ENCODE measurements at regions of chr4 and their contacts with region 1.

Region 1: GRCh38 chr4:124712372-124713184 is at the start of gene ANKRD50:
- DNase-seq: peak; percentile 89
- H3K4me3 ChIP-seq: peak within 1 kb of the TSS; percentile 78 to 98 (median 80)
- H3K27ac ChIP-seq: peak within 1 kb of the TSS; percentile 80
- H3K4me1 ChIP-seq: peaks cover 9% of the 10 kb centered on the region
- H3K27me3 ChIP-seq: no peaks in the 10 kb centered on the region
- CTCF ChIP-seq: no peak
- total RNA-seq, gene ANKRD50: 21.6 to 34.3 TPM

Region 2: DNA sequence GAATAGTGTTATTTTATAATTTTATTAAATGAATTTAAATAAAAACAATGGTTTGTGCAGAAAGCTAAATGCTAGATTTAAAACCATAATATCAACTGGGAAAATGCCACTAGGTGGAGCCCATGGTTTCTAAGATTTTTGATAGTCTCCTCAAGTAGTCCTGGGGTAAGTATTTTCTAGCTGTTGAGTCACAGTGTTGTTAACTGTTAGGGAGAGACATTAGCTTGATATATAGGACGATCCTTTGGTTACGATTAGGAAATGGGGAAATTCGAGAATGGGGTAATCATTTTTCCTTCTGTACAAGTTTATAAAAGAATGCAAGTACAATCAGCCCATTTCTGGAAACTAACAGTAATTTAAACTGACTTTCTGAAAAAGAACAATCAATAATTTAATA is 378.5 kb before region 1 on chr4:
- CTCF ChIA-PET with region 1: no interaction called
- dilution Hi-C with region 1: no loop called
- in situ Hi-C with region 1: no loop called
- intact Hi-C with region 1: loop called (anchors 1 kb)
- DNase-seq: peak; percentile 81
- H3K4me3 ChIP-seq: no peak overlapping the region
- H3K27ac ChIP-seq: no peak overlapping the region
- H3K4me1 ChIP-seq: no peaks in the 10 kb centered on the region
- H3K27me3 ChIP-seq: peaks cover 1% of the 10 kb centered on the region
- CTCF ChIP-seq: peak; percentile 53 to 67

Region 3: DNA sequence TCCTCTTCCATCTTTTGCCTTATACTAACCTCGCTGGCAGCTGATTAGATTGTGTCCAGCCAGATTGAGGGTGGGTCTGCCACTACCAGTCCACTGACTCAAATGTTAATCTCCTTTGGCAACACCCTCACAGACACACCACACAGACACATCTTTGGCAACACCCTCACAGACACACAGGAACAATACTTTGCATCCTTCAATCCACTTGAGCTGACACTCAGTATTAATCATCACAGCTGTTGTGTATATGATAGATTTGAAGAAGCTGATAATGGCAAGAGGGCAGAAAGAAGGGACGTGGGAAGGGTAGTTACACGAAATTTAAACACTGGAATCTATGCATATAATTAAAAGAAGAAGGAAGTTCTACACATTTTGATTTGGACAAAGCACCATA is 139.5 kb before region 1 on chr4:
- CTCF ChIA-PET with region 1: no interaction called
- dilution Hi-C with region 1: no loop called
- in situ Hi-C with region 1: no loop called
- intact Hi-C with region 1: loop called (anchors 10 kb)
- DNase-seq: no peak
- H3K4me3 ChIP-seq: no peak overlapping the region
- H3K27ac ChIP-seq: no peak overlapping the region
- H3K4me1 ChIP-seq: no peaks in the 10 kb centered on the region
- H3K27me3 ChIP-seq: no peaks in the 10 kb centered on the region
- CTCF ChIP-seq: no peak

Region 4: DNA sequence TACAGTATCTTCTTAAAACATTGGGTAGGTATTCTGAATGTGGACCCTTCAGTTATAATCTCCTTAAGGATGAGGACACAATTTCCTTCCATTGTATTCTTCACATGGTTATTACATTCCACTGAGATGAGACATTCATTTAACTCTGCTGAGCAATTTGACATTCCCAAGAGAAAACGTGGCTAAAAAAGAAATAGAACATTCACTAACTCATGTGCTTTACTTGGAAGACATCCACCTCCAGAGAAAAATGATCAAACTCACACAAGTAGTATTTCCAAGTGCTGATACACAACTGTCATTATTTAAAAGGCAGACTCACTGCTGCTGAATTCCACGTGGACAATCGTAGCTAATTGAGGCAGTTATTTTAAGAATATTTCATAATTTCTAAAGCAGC is 227.8 kb after region 1 on chr4:
- CTCF ChIA-PET with region 1: no interaction called
- dilution Hi-C with region 1: no loop called
- in situ Hi-C with region 1: loop called in 1 of 2 experiments (anchors 25 kb)
- intact Hi-C with region 1: loop called (anchors 2 kb)
- DNase-seq: peak; percentile 92
- H3K4me3 ChIP-seq: no peak overlapping the region
- H3K27ac ChIP-seq: peak overlapping the region; percentile 71
- H3K4me1 ChIP-seq: peaks cover 25% of the 10 kb centered on the region
- H3K27me3 ChIP-seq: no peaks in the 10 kb centered on the region
- CTCF ChIP-seq: no peak

Region 5: DNA sequence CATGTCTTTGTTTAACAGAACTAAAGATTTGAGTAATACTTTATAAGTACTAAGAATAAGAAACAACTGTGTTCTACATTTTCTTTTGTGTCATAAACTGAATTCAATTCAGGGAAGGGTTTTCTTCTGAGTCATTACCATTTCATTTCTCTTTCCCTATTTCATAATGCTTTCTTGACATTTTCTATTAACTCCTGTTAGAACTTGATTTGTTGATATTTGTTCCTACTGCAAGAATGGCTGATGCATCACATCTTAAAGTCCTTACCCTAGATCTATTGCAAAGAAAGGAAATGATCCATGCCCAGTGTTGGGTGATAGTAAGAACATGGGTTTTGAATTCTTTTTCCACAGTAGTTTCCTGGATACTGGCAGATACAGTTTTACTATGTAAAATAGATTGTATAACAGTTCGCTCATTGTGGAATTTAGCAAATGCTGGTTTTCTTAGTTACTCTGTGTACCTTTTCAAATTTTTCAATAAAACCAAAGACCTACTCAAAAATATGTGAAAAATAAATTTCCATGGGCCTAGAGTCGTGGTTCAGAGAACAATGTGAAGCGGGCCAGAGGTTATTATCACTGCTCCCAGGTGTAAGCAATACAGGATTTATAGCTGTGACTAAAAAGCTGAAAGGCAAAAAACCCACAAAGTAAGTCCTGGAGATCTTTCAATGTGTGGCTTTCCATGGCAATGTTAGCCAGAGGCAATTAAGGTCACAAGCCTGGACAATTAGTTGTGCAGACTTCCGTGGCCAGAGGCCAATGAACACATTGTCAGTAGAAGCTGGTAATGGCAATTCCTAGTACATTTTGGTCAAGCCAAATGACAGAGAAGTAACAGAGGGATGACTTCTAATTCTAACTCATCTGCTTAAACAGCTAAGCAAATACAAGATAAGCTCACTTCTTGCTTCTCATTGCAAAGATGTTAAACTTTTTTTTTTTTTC is 474.9 kb after region 1 on chr4:
- CTCF ChIA-PET with region 1: no interaction called
- dilution Hi-C with region 1: no loop called
- in situ Hi-C with region 1: no loop called
- intact Hi-C with region 1: loop called (anchors 5 kb)
- DNase-seq: peak; percentile 88
- H3K4me3 ChIP-seq: no peak overlapping the region
- H3K27ac ChIP-seq: peak overlapping the region; percentile 72
- H3K4me1 ChIP-seq: peaks cover 21% of the 10 kb centered on the region
- H3K27me3 ChIP-seq: no peaks in the 10 kb centered on the region
- CTCF ChIP-seq: no peak

Region 6: GRCh38 chr4:125266901-125267604 is 554.5 kb after region 1 on chr4:
- CTCF ChIA-PET with region 1: no interaction called
- dilution Hi-C with region 1: no loop called
- in situ Hi-C with region 1: loop called in 1 of 2 experiments (anchors 25 kb)
- intact Hi-C with region 1: no loop called
- DNase-seq: peak; percentile 96
- H3K4me3 ChIP-seq: peak overlapping the region; percentile 21 to 30 (median 22)
- H3K27ac ChIP-seq: peak overlapping the region; percentile 59
- H3K4me1 ChIP-seq: peaks cover 11% of the 10 kb centered on the region
- H3K27me3 ChIP-seq: no peaks in the 10 kb centered on the region
- CTCF ChIP-seq: no peak